ENCODE measurements at regions of chr2 and their contacts with region 1.

Region 1: DNA sequence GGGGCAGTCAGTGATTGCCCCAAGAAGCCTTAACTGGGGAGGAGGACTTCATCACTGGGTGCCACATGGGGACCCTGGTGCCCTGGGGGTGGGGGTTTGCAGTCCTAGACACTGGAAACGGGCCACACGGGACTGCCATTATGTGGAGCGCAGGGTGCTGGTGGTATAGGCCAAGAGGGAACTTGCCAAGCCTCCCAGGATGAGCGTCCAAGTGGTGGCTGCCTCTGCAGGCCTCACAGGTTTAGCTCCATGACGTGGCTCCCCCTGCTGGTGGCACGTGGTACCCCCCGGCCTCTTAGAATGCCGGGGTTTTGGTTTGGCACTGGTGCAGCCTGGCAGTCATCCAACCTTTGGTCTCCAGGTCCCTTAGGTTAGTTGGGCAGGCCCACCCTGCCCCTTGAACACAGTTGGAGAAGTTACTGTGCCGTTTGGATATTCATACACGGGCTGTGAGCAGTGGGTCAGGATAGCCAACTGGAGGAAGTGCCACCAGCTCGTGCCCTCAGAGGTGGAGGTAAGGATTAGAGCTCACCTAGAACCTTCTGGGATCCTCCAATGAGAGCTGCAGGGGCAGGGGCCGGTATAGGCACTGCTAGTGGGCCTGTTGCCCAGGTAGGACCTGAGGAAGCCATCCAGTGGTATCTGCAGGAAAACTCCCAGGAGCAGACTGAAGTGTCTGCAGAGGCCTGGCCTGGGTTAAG is 5.6 kb downstream of the PTMA start:
- DNase-seq: peak; percentile 92
- ATAC-seq: peak; percentile 44
- H3K4me3 ChIP-seq: no peak overlapping the region
- H3K27ac ChIP-seq: no peak overlapping the region
- H3K4me1 ChIP-seq: peaks cover 30% of the 10 kb centered on the region
- H3K27me3 ChIP-seq: no peaks in the 10 kb centered on the region
- CTCF ChIP-seq: peak; percentile 90

Region 2: DNA sequence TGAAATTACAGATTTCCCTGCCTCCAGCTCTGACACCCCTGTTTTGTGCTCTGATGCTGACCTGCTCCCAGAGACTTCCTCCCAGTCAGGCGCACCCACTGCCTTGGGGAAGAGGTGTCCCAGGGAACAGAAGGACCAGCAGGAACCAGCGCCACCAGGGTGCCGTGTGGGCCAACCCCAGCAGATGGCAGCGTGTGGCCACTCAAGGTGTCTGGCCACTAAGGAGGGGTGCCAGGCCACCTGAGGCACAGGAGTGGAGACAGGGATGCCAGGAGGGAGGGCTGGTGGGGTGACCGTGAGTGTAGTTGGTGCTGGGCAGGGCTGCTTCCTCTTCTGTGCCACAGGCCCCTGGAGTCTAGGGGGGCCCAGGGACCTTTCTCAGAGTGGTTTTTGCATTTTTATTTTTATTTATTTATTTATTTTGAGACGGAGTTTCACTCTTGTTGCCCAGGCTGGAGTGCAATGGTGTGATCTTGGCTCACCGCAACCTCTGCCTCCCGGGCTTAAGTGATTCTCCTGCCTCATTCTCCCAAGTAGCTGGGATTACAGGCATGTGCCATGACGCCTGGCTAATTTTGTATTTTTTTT is 65.2 kb before region 1 on chr2:
- CTCF ChIA-PET with region 1: interaction called, 4 read pairs
- POLR2A ChIA-PET with region 1: no interaction called
- intact Hi-C with region 1: loop called (anchors 1 kb)
- DNase-seq: peak; percentile 80
- ATAC-seq: peak; percentile 100
- H3K4me3 ChIP-seq: no peak overlapping the region
- H3K27ac ChIP-seq: no peak overlapping the region
- H3K4me1 ChIP-seq: peaks cover under 1% of the 10 kb centered on the region; the same call in 1 of the 2 replicates
- H3K27me3 ChIP-seq: no peaks in the 10 kb centered on the region
- CTCF ChIP-seq: peak; percentile 85

Measured in PC-3 (cell line).